ENCODE measurements at regions of chr2 and their contacts with region 1.

Region 1: GRCh38 chr2:219459460-219460311 is 25.0 kb downstream of the SPEG start:
- DNase-seq: peak; percentile 51
- ATAC-seq: peak; percentile 73
- H3K4me3 ChIP-seq: no peak overlapping the region
- H3K27ac ChIP-seq: no peak overlapping the region
- H3K4me1 ChIP-seq: peaks cover 17% of the 10 kb centered on the region
- H3K27me3 ChIP-seq: no peaks in the 10 kb centered on the region
- CTCF ChIP-seq: peak; percentile 89

Region 2: GRCh38 chr2:219430633-219431615 is 28.8 kb before region 1 on chr2:
- CTCF ChIA-PET with region 1: no interaction called
- POLR2A ChIA-PET with region 1: no interaction called
- intact Hi-C with region 1: loop called (anchors 1 kb)
- DNase-seq: peak; percentile 67
- ATAC-seq: peak; percentile 100
- H3K4me3 ChIP-seq: no peak overlapping the region
- H3K27ac ChIP-seq: no peak overlapping the region
- H3K4me1 ChIP-seq: no peaks in the 10 kb centered on the region
- H3K27me3 ChIP-seq: no peaks in the 10 kb centered on the region
- CTCF ChIP-seq: peak; percentile 65

Region 3: DNA sequence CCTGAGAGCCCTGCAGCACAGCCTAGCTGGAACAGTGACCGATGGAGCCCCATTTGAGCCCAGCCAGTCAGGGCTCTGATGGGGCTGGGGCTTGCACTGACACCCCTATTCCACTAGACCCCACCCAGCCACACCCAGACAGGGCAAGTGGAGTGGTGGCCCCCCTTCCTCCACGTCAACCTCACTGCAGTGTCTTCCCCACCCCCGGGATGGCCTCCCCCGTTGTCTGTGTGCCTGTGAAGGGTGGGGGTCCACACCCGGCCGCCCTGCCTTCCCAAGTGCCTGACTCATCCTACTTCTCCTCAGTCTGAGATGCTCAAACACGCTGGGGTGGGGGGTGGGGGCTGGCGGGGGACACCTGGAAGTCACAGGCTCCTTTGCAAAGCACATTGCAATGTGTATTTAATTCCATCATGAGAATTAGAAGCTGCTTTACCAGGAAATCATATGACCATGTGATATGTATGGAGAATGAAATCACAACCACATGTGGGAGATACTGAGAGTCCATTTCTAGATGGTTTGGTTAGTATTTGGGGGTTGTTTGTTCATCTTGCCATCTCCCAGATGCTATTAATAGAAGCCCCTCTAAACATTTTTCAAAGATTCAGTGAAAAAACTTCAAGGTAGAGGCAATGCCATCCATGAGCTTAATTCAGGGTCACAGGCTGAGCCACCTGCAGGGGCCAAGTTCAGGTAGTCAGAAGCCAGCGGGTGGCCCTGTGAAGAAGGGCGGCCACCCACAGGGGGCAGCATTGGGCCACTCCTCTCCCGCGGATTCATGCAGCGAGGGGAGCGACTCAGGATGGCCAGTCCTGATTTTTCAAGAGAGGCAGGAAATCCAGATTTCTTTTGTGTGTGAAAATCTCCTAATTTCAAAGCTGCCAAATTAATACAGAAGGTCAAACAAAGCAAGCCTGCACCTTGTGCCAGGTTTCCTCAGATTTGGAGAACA is 16.3 kb after region 1 on chr2:
- CTCF ChIA-PET with region 1: no interaction called
- POLR2A ChIA-PET with region 1: interaction called, 11 read pairs
- intact Hi-C with region 1: no loop called
- DNase-seq: peak; percentile 76
- ATAC-seq: peak; percentile 79
- H3K4me3 ChIP-seq: no peak overlapping the region
- H3K27ac ChIP-seq: no peak overlapping the region
- H3K4me1 ChIP-seq: 0 out of 2 replicates have a peak, but pooled peaks cover 4% of the 10 kb centered on the region
- H3K27me3 ChIP-seq: no peaks in the 10 kb centered on the region
- CTCF ChIP-seq: peak; percentile 95

Region 4: GRCh38 chr2:219498280-219499057 is 38.8 kb after region 1 on chr2 and contains the start of gene GMPPA:
- CTCF ChIA-PET with region 1: interaction called, 3 read pairs
- POLR2A ChIA-PET with region 1: interaction called, 5 read pairs
- intact Hi-C with region 1: loop called (anchors 2 kb)
- DNase-seq: peak; percentile 99
- ATAC-seq: peak; percentile 83
- H3K4me3 ChIP-seq: peak within 1 kb of the TSS; percentile 85
- H3K27ac ChIP-seq: peak within 1 kb of the TSS; percentile 68
- H3K4me1 ChIP-seq: peaks cover 21% of the 10 kb centered on the region
- H3K27me3 ChIP-seq: no peaks in the 10 kb centered on the region
- CTCF ChIP-seq: no peak
- total RNA-seq, gene GMPPA: 78.1 and 85.7 TPM in 2 replicates

Measured in PC-3 (cell line).